MCF 10A (cell line): ENCODE measurements at regions of chr5 and their contacts with region 1.

Region 1: DNA sequence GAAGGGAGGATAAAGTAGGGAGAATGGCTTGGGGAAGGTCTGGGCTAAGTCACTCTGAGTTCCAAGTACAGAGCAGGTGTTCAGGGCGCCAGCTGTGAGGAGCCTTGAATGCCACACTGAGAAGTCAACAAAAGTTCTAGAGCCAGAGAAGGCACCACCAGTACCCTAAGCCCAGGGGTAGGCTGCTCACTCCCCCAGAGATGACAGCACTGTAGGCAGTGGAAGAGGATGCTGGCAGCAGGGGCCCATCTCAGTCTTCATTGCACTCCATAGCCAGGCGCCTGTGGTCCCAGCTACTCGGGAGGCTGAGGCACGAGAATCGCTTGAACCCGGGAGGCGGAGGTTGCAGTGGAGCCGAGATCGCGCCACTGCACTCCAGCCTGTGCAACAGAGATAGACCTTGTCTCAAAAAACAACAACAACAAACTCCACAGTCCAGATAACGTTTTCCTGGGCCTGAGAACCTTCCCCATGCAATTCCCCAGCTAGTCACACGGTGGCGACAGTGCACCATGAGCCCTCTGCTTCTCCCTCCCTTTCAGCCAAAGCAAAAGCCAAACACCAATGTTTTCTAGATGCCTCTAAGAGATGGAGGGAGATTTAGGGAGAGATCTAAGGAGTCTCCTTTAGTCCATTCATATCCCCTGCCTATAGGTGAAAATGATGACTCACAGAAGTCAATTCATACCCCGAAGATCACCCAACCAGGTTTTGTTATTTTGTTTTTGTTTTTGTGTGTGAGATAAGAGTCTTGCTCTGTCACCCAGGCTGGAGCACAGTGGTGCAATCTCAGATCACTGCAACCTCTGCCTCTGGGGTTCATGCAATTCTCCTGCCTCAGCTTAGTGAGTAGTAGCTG is 19.8 kb upstream of the NSD1 start:
- DNase-seq: peak; percentile 86
- H3K4me3 Mint-ChIP-seq: no peak overlapping the region
- H3K27ac Mint-ChIP-seq: no peak overlapping the region
- H3K4me1 Mint-ChIP-seq: peaks cover 4% of the 10 kb centered on the region
- H3K27me3 Mint-ChIP-seq: no peaks in the 10 kb centered on the region
- CTCF ChIP-seq: peak; percentile 100

Region 2: GRCh38 chr5:176573564-176574296 is 540.1 kb before region 1 on chr5:
- CTCF ChIA-PET with region 1: no interaction called
- POLR2A ChIA-PET with region 1: no interaction called
- intact Hi-C with region 1: loop called (anchors 5 kb)
- DNase-seq: peak; percentile 77
- H3K4me3 Mint-ChIP-seq: no peak overlapping the region
- H3K27ac Mint-ChIP-seq: no peak overlapping the region
- H3K4me1 Mint-ChIP-seq: peaks cover 14% of the 10 kb centered on the region
- H3K27me3 Mint-ChIP-seq: peaks cover 18% of the 10 kb centered on the region
- CTCF ChIP-seq: peak; percentile 94

Region 3: DNA sequence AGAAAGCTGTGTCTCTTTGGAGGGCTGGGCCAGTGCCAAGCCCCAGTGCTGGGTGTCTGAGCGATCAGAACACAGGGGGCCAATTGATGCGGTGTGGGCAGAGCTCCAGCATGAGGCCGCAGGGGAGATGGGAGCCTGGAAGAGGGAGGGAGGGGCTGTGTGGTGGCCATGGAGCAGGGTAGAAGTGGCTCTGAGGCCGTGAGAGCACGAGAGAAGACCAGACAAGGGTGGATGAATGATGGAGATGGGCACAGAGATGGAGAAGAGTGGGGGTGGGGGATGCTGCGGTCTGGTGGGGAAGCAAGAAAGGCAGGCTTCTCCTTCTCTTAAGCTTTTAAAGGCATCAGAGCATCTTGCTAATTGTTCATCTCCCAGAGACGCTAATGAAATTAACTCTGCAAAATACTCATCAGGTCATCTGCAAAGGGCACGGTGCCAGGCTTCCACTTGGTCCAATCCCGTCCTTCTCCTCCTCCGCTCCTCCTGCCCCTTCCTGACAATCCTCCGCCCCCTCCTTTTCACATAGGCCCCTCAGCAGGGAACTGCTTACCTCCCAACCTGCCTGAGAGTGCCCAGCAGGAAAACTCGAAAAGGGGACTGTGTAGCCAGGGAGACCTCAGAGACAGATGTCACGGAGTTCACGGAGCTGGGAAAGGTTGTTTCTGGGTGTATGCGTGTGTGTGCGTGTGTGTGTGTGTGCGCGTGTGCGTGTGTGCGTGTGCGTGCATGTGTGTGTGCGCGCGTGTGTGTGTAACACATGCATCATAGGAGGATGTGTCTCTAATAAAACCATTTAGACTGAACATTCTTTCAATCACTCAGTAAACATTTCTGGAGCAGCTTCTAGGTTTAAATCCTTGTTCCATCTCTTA is 310.5 kb before region 1 on chr5:
- CTCF ChIA-PET with region 1: no interaction called
- POLR2A ChIA-PET with region 1: no interaction called
- intact Hi-C with region 1: no loop called
- DNase-seq: no peak
- H3K4me3 Mint-ChIP-seq: no peak overlapping the region
- H3K27ac Mint-ChIP-seq: no peak overlapping the region
- H3K4me1 Mint-ChIP-seq: no peaks in the 10 kb centered on the region
- H3K27me3 Mint-ChIP-seq: peaks cover 48% of the 10 kb centered on the region
- CTCF ChIP-seq: no peak

Region 4: DNA sequence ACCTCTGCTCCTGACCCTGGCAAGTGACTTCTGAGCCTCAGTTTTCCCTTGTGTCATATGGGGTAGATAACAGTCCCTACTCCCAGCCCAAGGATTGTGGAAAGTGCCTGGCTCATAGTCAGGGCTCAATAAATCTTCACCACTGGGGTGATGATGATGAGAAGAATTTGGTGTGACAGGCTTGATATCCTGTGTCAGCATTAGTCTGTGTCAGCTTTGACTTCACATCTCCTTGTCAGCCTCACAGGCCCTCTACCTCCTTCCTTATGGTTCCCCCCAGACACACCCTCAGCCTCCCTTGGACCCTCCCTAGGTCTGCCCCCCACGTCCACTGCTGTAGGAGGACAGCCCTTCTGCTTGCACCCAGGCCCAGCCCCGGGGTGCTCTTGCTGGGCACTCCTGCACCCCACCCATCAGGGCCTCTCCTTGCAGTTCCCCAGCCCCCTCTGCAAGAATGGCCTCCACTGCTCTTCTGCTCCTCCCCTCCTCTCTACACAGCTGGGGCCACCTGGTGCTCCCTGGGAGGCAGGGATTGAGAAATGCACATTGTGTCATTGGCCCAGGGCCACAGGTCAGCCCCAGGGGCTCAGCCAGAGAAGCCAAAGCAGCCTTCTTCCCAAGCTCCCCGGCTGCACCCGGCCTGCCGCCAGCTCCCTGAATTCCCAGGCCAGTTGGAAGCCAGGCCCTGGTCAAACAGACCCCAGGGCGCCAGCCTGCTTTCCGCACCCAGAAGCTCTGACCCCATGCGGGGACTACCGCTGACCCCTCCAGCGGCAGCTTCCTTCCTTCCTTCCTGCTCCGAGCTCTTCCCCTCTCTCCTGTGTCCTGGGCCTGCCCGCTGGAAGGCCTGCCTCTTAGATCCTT is 19.3 kb before region 1 on chr5:
- CTCF ChIA-PET with region 1: interaction called, 11 read pairs
- POLR2A ChIA-PET with region 1: no interaction called
- intact Hi-C with region 1: no loop called
- DNase-seq: peak; percentile 85
- H3K4me3 Mint-ChIP-seq: no peak overlapping the region
- H3K27ac Mint-ChIP-seq: no peak overlapping the region
- H3K4me1 Mint-ChIP-seq: peaks cover 11% of the 10 kb centered on the region
- H3K27me3 Mint-ChIP-seq: peaks cover 3% of the 10 kb centered on the region
- CTCF ChIP-seq: no peak

Region 5: GRCh38 chr5:177232761-177233160 is 119.0 kb after region 1 on chr5:
- CTCF ChIA-PET with region 1: interaction called, 8 read pairs
- POLR2A ChIA-PET with region 1: no interaction called
- intact Hi-C with region 1: loop called (anchors 1 kb)
- DNase-seq: peak; percentile 27
- H3K4me3 Mint-ChIP-seq: no peak overlapping the region
- H3K27ac Mint-ChIP-seq: peak overlapping the region; percentile 74
- H3K4me1 Mint-ChIP-seq: peaks cover 21% of the 10 kb centered on the region
- H3K27me3 Mint-ChIP-seq: no peaks in the 10 kb centered on the region
- CTCF ChIP-seq: no peak

Region 6: GRCh38 chr5:177271113-177271512 is 157.3 kb after region 1 on chr5:
- CTCF ChIA-PET with region 1: interaction called, 23 read pairs
- POLR2A ChIA-PET with region 1: no interaction called
- intact Hi-C with region 1: no loop called
- DNase-seq: no peak
- H3K4me3 Mint-ChIP-seq: no peak overlapping the region
- H3K27ac Mint-ChIP-seq: peak overlapping the region; percentile 50
- H3K4me1 Mint-ChIP-seq: peaks cover 17% of the 10 kb centered on the region
- H3K27me3 Mint-ChIP-seq: no peaks in the 10 kb centered on the region
- CTCF ChIP-seq: no peak

Region 7: GRCh38 chr5:177317959-177318377 is 204.2 kb after region 1 on chr5:
- CTCF ChIA-PET with region 1: interaction called, 17 read pairs
- POLR2A ChIA-PET with region 1: no interaction called
- intact Hi-C with region 1: no loop called
- DNase-seq: peak; percentile 85
- H3K4me3 Mint-ChIP-seq: no peak overlapping the region
- H3K27ac Mint-ChIP-seq: no peak overlapping the region
- H3K4me1 Mint-ChIP-seq: no peaks in the 10 kb centered on the region
- H3K27me3 Mint-ChIP-seq: no peaks in the 10 kb centered on the region
- CTCF ChIP-seq: peak; percentile 92

Region 8: GRCh38 chr5:177497292-177498033 is 383.7 kb after region 1 on chr5 and contains the start of gene PDLIM7:
- CTCF ChIA-PET with region 1: interaction called, 20 read pairs
- POLR2A ChIA-PET with region 1: interaction called, 4 read pairs
- intact Hi-C with region 1: loop called (anchors 5 kb)
- DNase-seq: peak; percentile 99
- H3K4me3 Mint-ChIP-seq: peak within 1 kb of the TSS; percentile 74
- H3K27ac Mint-ChIP-seq: peak within 1 kb of the TSS; percentile 55
- H3K4me1 Mint-ChIP-seq: peaks cover 58% of the 10 kb centered on the region
- H3K27me3 Mint-ChIP-seq: no peaks in the 10 kb centered on the region
- CTCF ChIP-seq: no peak
- total RNA-seq, gene PDLIM7: 164 and 257 TPM in 2 replicates